ENCODE measurements at regions of chr17 and their contacts with region 1.

Region 1: DNA sequence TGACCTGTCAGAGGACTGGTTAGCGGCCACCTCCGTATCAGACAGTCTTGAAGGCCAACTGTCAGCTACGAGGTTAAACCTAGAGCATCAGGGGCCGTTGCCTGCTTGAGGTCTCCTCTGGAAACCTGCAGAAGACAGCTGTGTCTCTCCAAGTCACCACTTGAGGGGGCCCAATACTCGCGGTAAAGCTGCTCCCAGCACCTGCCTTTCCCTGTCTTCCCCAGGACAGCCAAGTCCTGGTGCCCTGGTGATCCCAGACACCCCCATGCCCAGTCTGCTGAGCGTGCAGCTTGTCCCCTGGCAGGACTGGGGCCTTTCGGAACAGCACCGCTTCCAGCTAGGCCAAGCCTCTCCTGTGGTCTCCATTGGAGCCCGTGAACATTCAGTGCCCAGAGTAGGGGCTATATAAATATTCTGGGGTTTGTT is 80.1 kb downstream of the DNAH17 start:
- DNase-seq: peak; percentile 67 to 81 (median 76)
- ATAC-seq: peak; percentile 76
- H3K4me3 ChIP-seq: no peak overlapping the region
- H3K27ac ChIP-seq: no peak overlapping the region
- H3K4me1 ChIP-seq: no peaks in the 10 kb centered on the region
- H3K27me3 ChIP-seq: no peaks in the 10 kb centered on the region
- CTCF ChIP-seq: peak; percentile 33 to 78 (median 68)
- POLR2A ChIP-seq: no peak

Region 2: DNA sequence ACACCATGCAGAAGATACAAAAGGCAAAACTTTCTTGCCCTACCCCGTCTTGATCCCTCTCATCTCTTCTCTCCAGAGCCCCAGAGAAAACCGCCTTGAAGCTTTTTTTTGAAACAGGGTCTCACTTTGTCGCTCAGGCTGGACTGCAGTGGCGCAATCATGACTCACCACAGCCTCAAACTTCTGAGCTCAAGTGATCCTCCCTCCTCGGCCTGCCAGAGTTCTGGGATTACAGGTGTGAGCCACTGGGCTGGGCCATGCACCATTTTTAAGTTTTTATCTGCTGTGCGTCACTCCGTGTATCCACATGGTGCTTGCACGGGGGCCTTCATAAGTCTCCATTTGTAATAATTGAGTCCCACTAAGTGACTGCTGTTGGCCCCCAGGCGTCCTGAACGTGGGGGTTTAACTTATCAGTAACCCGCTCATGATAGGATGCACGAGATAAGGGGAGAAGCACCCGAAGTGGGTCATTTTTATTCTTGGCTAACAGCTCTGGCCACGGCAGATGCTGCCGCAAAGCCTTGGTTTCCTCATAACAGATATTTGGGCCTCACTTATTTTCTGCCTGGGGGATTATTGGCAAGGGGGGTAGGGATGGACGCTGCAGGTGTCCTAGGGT is 71.5 kb after region 1 on chr17:
- intact Hi-C with region 1: no loop called
- DNase-seq: peak in 1 of 4 donors; percentile 35
- ATAC-seq: no peak
- H3K4me3 ChIP-seq: no peak overlapping the region
- H3K27ac ChIP-seq: no peak overlapping the region
- H3K4me1 ChIP-seq: no peaks in the 10 kb centered on the region
- H3K27me3 ChIP-seq: no peaks in the 10 kb centered on the region
- CTCF ChIP-seq: no peak
- POLR2A ChIP-seq: no peak

Region 3: DNA sequence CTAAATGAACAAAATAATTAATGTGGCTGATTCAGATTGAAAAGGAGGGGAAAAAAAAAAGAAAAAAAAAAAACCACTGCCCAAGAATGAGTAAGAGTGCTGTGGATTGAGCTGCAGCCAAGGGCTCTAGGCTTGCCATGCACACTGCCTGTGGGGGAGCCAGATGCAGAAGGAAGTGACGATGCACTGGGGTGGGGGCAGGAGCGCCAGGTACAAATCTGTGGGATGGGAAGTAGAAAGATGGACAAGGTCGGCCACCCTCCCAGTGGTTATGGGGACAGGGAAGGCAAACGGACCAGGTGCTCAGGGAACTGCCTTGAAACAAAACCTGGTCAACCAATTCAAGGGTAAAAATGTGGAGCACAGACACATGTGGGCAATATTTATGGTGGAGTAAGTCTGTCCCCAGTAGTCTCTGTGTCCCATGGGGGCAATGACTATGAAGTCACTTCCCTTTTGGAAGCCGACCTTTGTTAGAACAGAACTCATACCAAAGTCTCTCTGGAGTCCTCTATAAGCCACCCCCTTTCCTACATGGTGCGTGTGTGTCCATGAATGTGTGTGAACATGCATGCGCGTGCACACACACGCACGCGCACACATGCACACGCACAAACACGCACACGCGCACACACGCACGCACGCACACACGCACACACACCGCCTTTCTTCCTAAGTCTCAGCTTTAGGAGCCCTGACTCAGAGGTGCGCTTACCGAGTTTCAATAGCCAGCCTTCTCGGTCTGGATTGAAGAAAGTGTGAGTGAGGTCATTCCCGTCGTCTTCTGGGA is 200.6 kb after region 1 on chr17:
- intact Hi-C with region 1: loop called (anchors 10 kb)
- DNase-seq: no peak
- ATAC-seq: no peak
- H3K4me3 ChIP-seq: no peak overlapping the region
- H3K27ac ChIP-seq: no peak overlapping the region
- H3K4me1 ChIP-seq: no peaks in the 10 kb centered on the region
- H3K27me3 ChIP-seq: no peaks in the 10 kb centered on the region
- CTCF ChIP-seq: no peak
- POLR2A ChIP-seq: no peak

Measured in body of pancreas (tissue), 4 donors.